ENCODE measurements at regions of chr18 and their contacts with region 1.

Region 1: GRCh38 chr18:11851146-11851805 is at the start of gene CHMP1B:
- DNase-seq: peak; percentile 98 to 99
- ATAC-seq: peak; percentile 79 to 92 (median 82)
- H3K4me3 ChIP-seq: peak within 1 kb of the TSS; percentile 87
- H3K4me3 Mint-ChIP-seq: peak within 1 kb of the TSS; percentile 100
- H3K27ac ChIP-seq: peak within 1 kb of the TSS; percentile 95
- H3K27ac Mint-ChIP-seq: peak within 1 kb of the TSS; percentile 100
- H3K4me1 ChIP-seq: peaks cover 19% of the 10 kb centered on the region
- H3K4me1 Mint-ChIP-seq: peaks cover 43 to 46% of the 10 kb centered on the region in 2 donors
- H3K27me3 ChIP-seq: no peaks in the 10 kb centered on the region
- H3K27me3 Mint-ChIP-seq: no peaks in the 10 kb centered on the region
- CTCF ChIP-seq: no peak
- total RNA-seq, gene CHMP1B: 99.4 to 132 (median 110) TPM

Region 2: GRCh38 chr18:11714244-11714918 is 136.9 kb before region 1 on chr18:
- intact Hi-C with region 1: no loop called
- DNase-seq: no peak
- ATAC-seq: no peak
- H3K4me3 ChIP-seq: no peak overlapping the region
- H3K4me3 Mint-ChIP-seq: no peak overlapping the region
- H3K27ac ChIP-seq: no peak overlapping the region
- H3K27ac Mint-ChIP-seq: no peak overlapping the region
- H3K4me1 ChIP-seq: no peaks in the 10 kb centered on the region
- H3K4me1 Mint-ChIP-seq: no peaks in the 10 kb centered on the region
- H3K27me3 ChIP-seq: peaks cover 2% of the 10 kb centered on the region
- H3K27me3 Mint-ChIP-seq: peaks cover 20 to 36% of the 10 kb centered on the region in 2 donors
- CTCF ChIP-seq: no peak

Region 3: DNA sequence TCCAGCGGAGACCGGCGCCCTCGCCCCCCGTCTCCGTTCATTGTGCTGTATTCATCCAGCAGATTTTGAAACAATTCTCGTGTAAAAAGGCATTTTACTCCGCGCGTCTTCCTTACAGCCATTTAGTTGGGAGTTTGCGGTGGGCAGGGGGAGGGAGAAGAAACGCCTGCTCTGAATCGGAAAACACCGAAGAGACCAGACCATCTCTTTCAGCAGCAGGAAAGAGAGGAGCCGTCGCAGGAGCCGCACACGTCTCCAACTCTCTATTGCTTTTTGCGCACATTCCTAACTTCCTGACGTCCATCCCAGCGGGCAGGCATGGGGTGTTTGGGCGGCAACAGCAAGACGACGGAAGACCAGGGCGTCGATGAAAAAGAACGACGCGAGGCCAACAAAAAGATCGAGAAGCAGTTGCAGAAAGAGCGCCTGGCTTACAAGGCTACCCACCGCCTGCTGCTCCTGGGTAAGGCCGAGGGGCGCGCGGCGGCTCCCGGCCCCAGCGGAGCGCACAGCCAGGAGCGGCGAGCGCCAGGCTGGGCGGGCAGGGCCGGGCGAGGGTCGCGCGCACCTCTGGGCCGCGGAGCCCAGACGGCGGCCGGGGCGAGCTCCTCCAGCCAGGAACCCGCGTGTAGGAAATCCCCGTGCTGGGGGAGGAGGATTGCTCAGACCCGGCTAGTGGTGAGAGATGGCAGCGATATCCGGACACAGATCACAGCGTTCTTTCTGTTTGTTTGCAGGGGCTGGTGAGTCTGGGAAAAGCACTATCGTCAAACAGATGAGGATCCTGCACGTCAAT is 99.0 kb before region 1 on chr18:
- intact Hi-C with region 1: loop called (anchors 5 kb)
- DNase-seq: peak; percentile 28 to 30
- ATAC-seq: peak; percentile 74 to 89 (median 88)
- H3K4me3 ChIP-seq: peak overlapping the region; percentile 30
- H3K4me3 Mint-ChIP-seq: peak overlapping the region; percentile 89
- H3K27ac ChIP-seq: peak overlapping the region; percentile 58
- H3K27ac Mint-ChIP-seq: peak overlapping the region; percentile 80 to 88
- H3K4me1 ChIP-seq: peaks cover 4% of the 10 kb centered on the region
- H3K4me1 Mint-ChIP-seq: peaks cover 5 to 13% of the 10 kb centered on the region in 2 donors
- H3K27me3 ChIP-seq: peaks cover 6% of the 10 kb centered on the region
- H3K27me3 Mint-ChIP-seq: peaks cover 29 to 34% of the 10 kb centered on the region in 2 donors
- CTCF ChIP-seq: no peak

Region 4: GRCh38 chr18:11808001-11808855 is 43.0 kb before region 1 on chr18:
- intact Hi-C with region 1: loop called (anchors 5 kb)
- DNase-seq: no peak
- ATAC-seq: no peak
- H3K4me3 ChIP-seq: no peak overlapping the region
- H3K4me3 Mint-ChIP-seq: no peak overlapping the region
- H3K27ac ChIP-seq: no peak overlapping the region
- H3K27ac Mint-ChIP-seq: no peak overlapping the region
- H3K4me1 ChIP-seq: no peaks in the 10 kb centered on the region
- H3K4me1 Mint-ChIP-seq: peaks cover 10 to 13% of the 10 kb centered on the region in 2 donors
- H3K27me3 ChIP-seq: no peaks in the 10 kb centered on the region
- H3K27me3 Mint-ChIP-seq: no peaks in the 10 kb centered on the region
- CTCF ChIP-seq: no peak

Region 5: DNA sequence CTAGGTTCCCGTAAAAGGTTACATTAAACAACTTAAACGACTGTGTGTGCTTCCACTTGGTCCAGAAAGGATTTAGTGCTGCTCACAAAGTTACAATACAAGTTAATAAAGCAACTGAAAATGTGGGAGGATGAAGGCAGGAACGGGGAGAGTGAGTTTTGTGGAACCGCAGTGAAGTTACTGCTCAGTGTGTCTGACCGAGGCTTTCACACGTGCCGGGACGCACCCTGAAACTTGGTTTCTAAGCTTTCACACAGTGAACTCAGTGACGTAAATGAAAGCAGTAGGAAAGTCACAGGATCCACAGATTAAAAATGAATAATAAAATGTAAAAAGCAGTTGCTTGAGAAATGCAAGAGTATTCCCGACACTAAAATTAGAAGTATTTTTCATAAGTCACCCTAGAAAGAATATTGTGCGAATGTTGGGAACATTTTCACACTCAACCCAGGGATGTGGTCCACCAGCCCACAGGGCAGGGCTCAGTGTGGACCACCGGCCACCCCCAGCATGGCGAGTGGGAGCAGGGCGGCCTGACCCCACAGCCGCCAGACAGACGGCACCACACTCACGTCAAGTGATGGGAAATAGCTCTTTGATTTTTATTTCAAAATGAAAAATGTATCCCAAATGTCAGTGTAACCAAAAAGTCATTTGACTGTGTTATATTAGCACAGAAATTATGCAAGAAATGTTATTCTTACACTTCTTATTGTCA is 32.6 kb before region 1 on chr18:
- intact Hi-C with region 1: loop called (anchors 1 kb)
- DNase-seq: peak; percentile 35 to 54
- ATAC-seq: peak; percentile 74 to 89 (median 86)
- H3K4me3 ChIP-seq: no peak overlapping the region
- H3K4me3 Mint-ChIP-seq: peak overlapping the region; percentile 81
- H3K27ac ChIP-seq: peak overlapping the region; percentile 92
- H3K27ac Mint-ChIP-seq: peak overlapping the region; percentile 54 to 91
- H3K4me1 ChIP-seq: peaks cover 8% of the 10 kb centered on the region
- H3K4me1 Mint-ChIP-seq: no peaks in the 10 kb centered on the region
- H3K27me3 ChIP-seq: no peaks in the 10 kb centered on the region
- H3K27me3 Mint-ChIP-seq: no peaks in the 10 kb centered on the region
- CTCF ChIP-seq: no peak

Region 6: DNA sequence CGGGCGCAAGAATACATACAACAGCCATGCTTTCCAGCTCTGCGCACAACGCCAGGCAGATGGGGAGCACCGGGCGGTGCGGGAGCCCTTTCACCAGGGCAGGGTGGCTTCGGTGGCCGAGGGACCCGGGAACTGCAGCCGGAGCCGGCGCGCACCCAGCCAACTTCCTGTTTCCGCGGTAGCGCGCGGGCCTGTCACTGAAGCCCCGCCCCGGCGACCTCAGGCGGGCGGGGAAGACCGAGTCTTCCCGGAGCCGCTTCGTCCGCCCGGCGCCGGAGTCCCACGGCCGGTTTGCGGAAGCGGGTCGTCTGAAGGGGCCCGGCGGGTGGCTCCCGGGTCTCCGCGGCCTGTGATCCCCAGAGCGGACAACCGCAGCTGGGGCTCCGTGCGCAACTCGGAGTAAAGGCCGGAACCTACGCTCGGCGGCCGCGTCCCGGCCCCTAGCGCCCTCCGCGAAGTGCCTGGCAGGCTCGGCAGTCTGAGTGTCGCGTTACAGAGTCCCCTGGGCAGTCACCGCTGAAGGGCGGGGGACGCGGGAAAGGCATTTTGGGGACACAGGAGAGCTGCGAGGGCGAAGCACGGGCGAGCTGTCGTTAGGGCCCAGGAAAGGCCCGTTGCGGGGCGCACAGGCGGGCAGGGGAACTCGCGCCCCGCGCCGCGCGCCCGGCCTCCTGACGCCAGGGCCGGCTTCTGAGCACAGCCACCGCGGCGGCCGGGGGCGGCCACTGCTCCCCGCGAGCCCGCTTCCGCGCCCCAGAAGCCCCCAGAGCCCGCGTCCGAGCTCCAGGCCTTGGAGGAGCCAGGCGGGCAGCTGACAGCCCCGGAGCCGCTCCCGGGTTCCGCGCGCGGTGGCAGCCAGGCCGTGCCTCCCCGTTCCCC is 57.1 kb after region 1 on chr18 and contains the start of gene MPPE1:
- intact Hi-C with region 1: loop called (anchors 1 kb)
- DNase-seq: peak; percentile 87 to 93
- ATAC-seq: peak; percentile 90 to 95 (median 91)
- H3K4me3 ChIP-seq: peak within 1 kb of the TSS; percentile 99
- H3K4me3 Mint-ChIP-seq: peak within 1 kb of the TSS; percentile 94
- H3K27ac ChIP-seq: peak within 1 kb of the TSS; percentile 100
- H3K27ac Mint-ChIP-seq: peak within 1 kb of the TSS; percentile 91 to 96
- H3K4me1 ChIP-seq: peaks cover 14% of the 10 kb centered on the region
- H3K4me1 Mint-ChIP-seq: peaks cover 14 to 35% of the 10 kb centered on the region in 2 donors
- H3K27me3 ChIP-seq: no peaks in the 10 kb centered on the region
- H3K27me3 Mint-ChIP-seq: no peaks in the 10 kb centered on the region
- CTCF ChIP-seq: no peak
- total RNA-seq, gene MPPE1: 98.3 to 110 (median 105) TPM